ENCODE measurements at regions of chr6 and their contacts with region 1.

Region 1: GRCh38 chr6:11093589-11094410 is at the start of gene SMIM13:
- DNase-seq: peak; percentile 98
- ATAC-seq: peak; percentile 97
- H3K4me3 ChIP-seq: peak within 1 kb of the TSS; percentile 93 to 99 (median 97)
- H3K27ac ChIP-seq: peak within 1 kb of the TSS; percentile 90
- H3K4me1 ChIP-seq: peaks cover 44% of the 10 kb centered on the region
- H3K27me3 ChIP-seq: no peaks in the 10 kb centered on the region; a peak in 1 of 5 replicates
- CTCF ChIP-seq: peak; percentile 67
- EP300 ChIP-seq: peak in 1 of 2 experiments; percentile 20; a peak in 2 of 4 replicates
- POLR2A ChIP-seq: peak; percentile 89 to 92
- RAD21 ChIP-seq: peak; percentile 79
- total RNA-seq, gene SMIM13: 9.5 and 10.2 TPM in 2 replicates

Region 2: GRCh38 chr6:10323018-10323760 is 770.6 kb before region 1 on chr6:
- CTCF ChIA-PET with region 1: no interaction called
- POLR2A ChIA-PET with region 1: no interaction called
- in situ Hi-C with region 1: no loop called
- intact Hi-C with region 1: no loop called
- DNase-seq: no peak
- ATAC-seq: no peak
- H3K4me3 ChIP-seq: no peak overlapping the region
- H3K27ac ChIP-seq: no peak overlapping the region
- H3K4me1 ChIP-seq: no peaks in the 10 kb centered on the region
- H3K27me3 ChIP-seq: peaks cover 0 to 21% of the 10 kb centered on the region in 2 experiments; a peak in 4 of 5 replicates
- CTCF ChIP-seq: no peak
- EP300 ChIP-seq: no peak
- POLR2A ChIP-seq: no peak
- RAD21 ChIP-seq: no peak

Region 3: GRCh38 chr6:11537229-11538051 is 443.6 kb after region 1 on chr6 and contains the start of gene TMEM170B:
- CTCF ChIA-PET with region 1: no interaction called
- POLR2A ChIA-PET with region 1: no interaction called
- in situ Hi-C with region 1: no loop called
- intact Hi-C with region 1: loop called (anchors 2 kb)
- DNase-seq: peak; percentile 91
- ATAC-seq: peak; percentile 97
- H3K4me3 ChIP-seq: peak within 1 kb of the TSS; percentile 74 to 94 (median 94)
- H3K27ac ChIP-seq: peak within 1 kb of the TSS; percentile 71
- H3K4me1 ChIP-seq: peaks cover 37% of the 10 kb centered on the region
- H3K27me3 ChIP-seq: no peaks in the 10 kb centered on the region
- CTCF ChIP-seq: no peak
- EP300 ChIP-seq: no peak; a peak in 1 of 4 replicates
- POLR2A ChIP-seq: peak; percentile 38 to 71
- RAD21 ChIP-seq: peak; percentile 35; the same call in 1 of the 2 replicates
- total RNA-seq, gene TMEM170B: 9.4 and 14.3 TPM in 2 replicates

Region 4: DNA sequence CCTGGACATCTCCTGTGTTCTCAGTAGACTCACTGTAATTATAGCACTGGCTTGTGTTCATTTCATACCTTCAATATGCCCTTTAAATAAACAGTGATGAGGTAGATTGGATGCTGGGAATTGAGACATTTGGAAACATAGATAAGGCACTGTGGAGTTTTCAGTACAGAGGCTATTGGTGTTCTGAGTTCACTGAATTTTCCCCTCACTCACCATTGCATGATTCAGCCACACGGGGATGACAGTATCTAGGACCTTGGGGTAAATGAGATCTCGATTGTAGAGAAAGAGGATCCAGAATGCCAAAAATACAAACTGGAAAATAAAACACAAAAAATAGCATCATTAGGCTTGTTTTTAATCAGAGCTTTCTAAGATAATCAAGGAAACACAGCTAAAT is 672.3 kb after region 1 on chr6:
- CTCF ChIA-PET with region 1: no interaction called
- POLR2A ChIA-PET with region 1: no interaction called
- in situ Hi-C with region 1: no loop called
- intact Hi-C with region 1: no loop called
- DNase-seq: no peak
- ATAC-seq: no peak
- H3K4me3 ChIP-seq: no peak overlapping the region
- H3K27ac ChIP-seq: no peak overlapping the region
- H3K4me1 ChIP-seq: peaks cover 5% of the 10 kb centered on the region; the same call in 1 of the 2 replicates
- H3K27me3 ChIP-seq: peaks cover 3 to 14% of the 10 kb centered on the region in 2 experiments; a peak in 2 of 5 replicates
- CTCF ChIP-seq: no peak
- EP300 ChIP-seq: no peak
- POLR2A ChIP-seq: no peak
- RAD21 ChIP-seq: no peak

Measured in HepG2 (cell line).